CD4-positive, alpha-beta memory T cell (primary cell): ENCODE measurements at regions of chr1 and their contacts with region 1.

Region 1: GRCh38 chr1:147890177-147890790 is 12.3 kb upstream of the GJA8 start:
- DNase-seq: peak; percentile 47 to 60 (median 51)
- H3K4me3 ChIP-seq: no peak overlapping the region
- H3K4me3 Mint-ChIP-seq: no peak overlapping the region
- H3K27ac ChIP-seq: no peak overlapping the region
- H3K27ac Mint-ChIP-seq: peak overlapping the region in 1 of 7 donors; percentile 6
- H3K4me1 ChIP-seq: no peaks in the 10 kb centered on the region
- H3K4me1 Mint-ChIP-seq: peaks cover 0 to 9% (median under 1%) of the 10 kb centered on the region in 4 donors
- H3K27me3 ChIP-seq: no peaks in the 10 kb centered on the region
- H3K27me3 Mint-ChIP-seq: peaks cover 1 to 3% of the 10 kb centered on the region in 2 donors

Region 2: GRCh38 chr1:147273409-147274336 is 616.6 kb before region 1 on chr1:
- CTCF ChIA-PET with region 1: interaction called, 18 read pairs
- POLR2A ChIA-PET with region 1: no interaction called
- intact Hi-C with region 1: loop called (anchors 1 kb)
- DNase-seq: peak in 4 of 5 donors; percentile 36 to 45 (median 44)
- H3K4me3 ChIP-seq: no peak overlapping the region
- H3K4me3 Mint-ChIP-seq: no peak overlapping the region
- H3K27ac ChIP-seq: no peak overlapping the region
- H3K27ac Mint-ChIP-seq: no peak overlapping the region
- H3K4me1 ChIP-seq: no peaks in the 10 kb centered on the region
- H3K4me1 Mint-ChIP-seq: peaks cover 0 to 6% (median 4%) of the 10 kb centered on the region in 4 donors
- H3K27me3 ChIP-seq: no peaks in the 10 kb centered on the region
- H3K27me3 Mint-ChIP-seq: no peaks in the 10 kb centered on the region

Region 3: DNA sequence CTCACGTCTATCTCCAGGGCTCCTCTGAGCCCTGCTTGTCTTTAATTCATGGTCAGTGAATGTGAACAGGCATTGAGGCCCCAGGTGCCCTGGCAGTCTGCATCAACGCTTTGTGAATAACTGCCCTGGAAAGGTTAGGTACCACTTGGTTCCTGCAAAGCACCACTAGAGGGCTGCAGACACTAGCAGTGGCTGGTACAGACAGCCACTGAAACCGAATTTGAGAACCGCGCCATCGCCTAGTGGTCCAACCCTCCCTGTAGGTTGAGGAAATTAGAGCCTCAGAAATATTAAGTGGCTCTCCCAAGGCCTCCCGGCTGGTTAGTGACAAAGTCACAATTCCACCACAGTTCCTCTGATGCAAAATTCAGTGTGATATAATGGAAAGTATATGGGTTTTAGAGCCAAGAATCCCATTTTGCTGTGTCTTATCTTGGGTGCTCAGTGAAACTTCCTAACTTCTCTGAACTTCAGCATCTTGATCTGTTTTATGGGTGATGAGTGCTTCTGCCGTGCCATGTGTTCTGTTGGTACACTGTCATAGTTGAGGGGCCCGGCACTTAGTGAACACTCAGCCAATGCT is 395.2 kb before region 1 on chr1:
- CTCF ChIA-PET with region 1: interaction called, 13 read pairs
- POLR2A ChIA-PET with region 1: no interaction called
- intact Hi-C with region 1: loop called (anchors 1 kb)
- DNase-seq: peak; percentile 65 to 70 (median 67)
- H3K4me3 ChIP-seq: no peak overlapping the region
- H3K4me3 Mint-ChIP-seq: peak overlapping the region in 2 of 8 donors; percentile 12 to 64
- H3K27ac ChIP-seq: no peak overlapping the region
- H3K27ac Mint-ChIP-seq: no peak overlapping the region
- H3K4me1 ChIP-seq: no peaks in the 10 kb centered on the region
- H3K4me1 Mint-ChIP-seq: peaks cover 0 to 2% (median under 1%) of the 10 kb centered on the region in 4 donors
- H3K27me3 ChIP-seq: no peaks in the 10 kb centered on the region
- H3K27me3 Mint-ChIP-seq: peaks cover 0 to 10% of the 10 kb centered on the region in 2 donors

Region 4: GRCh38 chr1:147515046-147515869 is 375.0 kb before region 1 on chr1:
- CTCF ChIA-PET with region 1: interaction called, 17 read pairs
- POLR2A ChIA-PET with region 1: no interaction called
- intact Hi-C with region 1: loop called (anchors 1 kb)
- DNase-seq: peak in 4 of 5 donors; percentile 9 to 29 (median 24)
- H3K4me3 ChIP-seq: no peak overlapping the region
- H3K4me3 Mint-ChIP-seq: no peak overlapping the region
- H3K27ac ChIP-seq: no peak overlapping the region
- H3K27ac Mint-ChIP-seq: peak overlapping the region in 2 of 7 donors; percentile 39 to 51
- H3K4me1 ChIP-seq: no peaks in the 10 kb centered on the region
- H3K4me1 Mint-ChIP-seq: peaks cover 5 to 7% (median 6%) of the 10 kb centered on the region in 4 donors
- H3K27me3 ChIP-seq: no peaks in the 10 kb centered on the region
- H3K27me3 Mint-ChIP-seq: peaks cover 0 to 9% of the 10 kb centered on the region in 2 donors

Region 5: DNA sequence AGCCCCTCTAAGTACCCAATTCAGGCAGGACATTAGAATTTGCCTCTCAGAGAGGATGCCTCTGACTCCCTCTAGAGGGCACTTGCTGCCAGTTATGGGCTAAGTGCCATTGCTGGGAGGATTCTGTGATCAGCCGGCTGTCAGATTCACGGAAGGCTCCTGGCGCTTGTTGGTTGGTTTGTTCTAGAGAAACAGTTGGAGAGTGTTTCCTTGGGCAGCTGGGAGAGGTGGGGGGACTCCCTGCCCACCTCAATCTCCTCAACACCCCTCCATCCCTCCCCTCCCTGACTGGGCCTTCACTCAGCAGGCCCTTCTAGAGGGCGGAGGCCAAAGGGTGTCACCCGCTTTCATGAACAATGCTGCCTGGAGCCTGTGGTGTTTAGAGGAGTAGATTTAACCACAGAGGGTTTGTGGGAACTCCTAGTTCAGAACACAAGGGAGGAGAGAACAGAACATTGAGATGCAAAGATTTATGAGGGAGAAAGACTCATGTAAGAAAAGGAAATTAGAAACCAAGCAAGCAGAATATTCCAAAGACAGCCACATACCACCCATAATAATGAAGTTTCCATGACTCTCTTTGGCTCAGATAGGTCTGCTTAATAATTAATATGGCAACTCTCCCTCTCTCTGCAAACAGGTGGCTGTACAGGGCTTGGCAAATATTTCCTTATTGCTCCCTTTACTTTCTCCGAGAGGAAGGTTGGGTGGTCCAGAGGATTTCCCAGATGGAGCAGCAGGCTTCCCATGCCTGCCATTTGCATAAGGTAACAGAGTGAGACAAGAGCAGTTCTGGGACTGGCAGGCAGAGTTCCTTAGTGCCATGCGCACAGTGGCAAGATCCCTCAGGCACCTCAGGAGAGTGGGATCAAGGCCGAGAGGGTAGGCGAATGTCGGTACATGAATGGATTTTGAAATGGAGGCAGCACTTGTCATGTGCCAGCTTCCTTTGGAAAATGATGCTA is 190.0 kb before region 1 on chr1:
- CTCF ChIA-PET with region 1: interaction called, 12 read pairs
- POLR2A ChIA-PET with region 1: no interaction called
- intact Hi-C with region 1: loop called (anchors 1 kb)
- DNase-seq: peak; percentile 63 to 70 (median 68)
- H3K4me3 ChIP-seq: no peak overlapping the region
- H3K4me3 Mint-ChIP-seq: peak overlapping the region in 7 of 8 donors; percentile 40 to 80 (median 70)
- H3K27ac ChIP-seq: peak overlapping the region; percentile 30
- H3K27ac Mint-ChIP-seq: peak overlapping the region; percentile 37 to 91 (median 73)
- H3K4me1 ChIP-seq: peaks cover 9% of the 10 kb centered on the region
- H3K4me1 Mint-ChIP-seq: peaks cover 12 to 21% (median 17%) of the 10 kb centered on the region in 4 donors
- H3K27me3 ChIP-seq: no peaks in the 10 kb centered on the region
- H3K27me3 Mint-ChIP-seq: peaks cover 5 to 9% of the 10 kb centered on the region in 2 donors

Region 6: DNA sequence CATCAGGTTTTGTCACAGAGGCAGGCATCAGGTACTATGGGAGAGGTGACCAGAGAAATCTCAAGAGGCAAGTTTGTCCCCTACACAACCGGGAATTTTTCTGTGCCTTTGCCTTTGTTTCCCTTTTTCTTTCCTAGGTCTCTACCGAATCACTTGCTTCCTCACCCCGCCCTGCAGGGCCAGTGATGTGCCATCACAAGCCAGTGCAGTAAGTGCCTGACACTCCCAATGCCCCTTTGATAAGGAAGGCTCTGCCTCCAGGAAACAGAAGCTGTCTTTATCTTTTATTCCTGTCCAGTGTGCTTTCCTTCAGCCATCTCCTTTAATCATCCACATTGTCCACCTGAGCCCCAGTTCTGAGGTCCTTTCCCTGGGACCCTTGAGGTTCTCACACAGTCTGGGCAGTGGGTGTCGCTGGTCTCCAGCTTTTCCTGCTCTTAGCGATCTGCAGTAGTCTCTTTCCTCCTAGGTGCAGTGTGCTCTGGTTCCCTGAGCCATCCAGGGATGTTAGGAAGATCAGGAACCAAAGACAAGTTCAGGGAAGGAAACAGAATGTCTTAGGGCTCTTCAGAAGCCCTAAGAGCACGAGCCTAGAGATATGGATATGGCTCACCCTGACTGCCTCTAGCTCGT is 166.5 kb before region 1 on chr1:
- CTCF ChIA-PET with region 1: interaction called, 26 read pairs
- POLR2A ChIA-PET with region 1: no interaction called
- intact Hi-C with region 1: loop called (anchors 1 kb)
- DNase-seq: peak in 3 of 5 donors; percentile 23 to 30 (median 24)
- H3K4me3 ChIP-seq: no peak overlapping the region
- H3K4me3 Mint-ChIP-seq: no peak overlapping the region
- H3K27ac ChIP-seq: no peak overlapping the region
- H3K27ac Mint-ChIP-seq: peak overlapping the region in 2 of 7 donors; percentile 1 to 3
- H3K4me1 ChIP-seq: peaks cover 4% of the 10 kb centered on the region
- H3K4me1 Mint-ChIP-seq: peaks cover 0 to 9% (median 4%) of the 10 kb centered on the region in 4 donors
- H3K27me3 ChIP-seq: no peaks in the 10 kb centered on the region
- H3K27me3 Mint-ChIP-seq: peaks cover 3 to 6% of the 10 kb centered on the region in 2 donors

Region 7: GRCh38 chr1:147902183-147902845 is 12.0 kb after region 1 on chr1 and contains the start of gene GJA8:
- CTCF ChIA-PET with region 1: interaction called, 28 read pairs
- POLR2A ChIA-PET with region 1: no interaction called
- intact Hi-C with region 1: no loop called
- DNase-seq: no peak
- H3K4me3 ChIP-seq: no peak within 1 kb of the TSS
- H3K4me3 Mint-ChIP-seq: no peak within 1 kb of the TSS
- H3K27ac ChIP-seq: no peak within 1 kb of the TSS
- H3K27ac Mint-ChIP-seq: no peak within 1 kb of the TSS
- H3K4me1 ChIP-seq: no peaks in the 10 kb centered on the region
- H3K4me1 Mint-ChIP-seq: peaks cover 3 to 5% (median 4%) of the 10 kb centered on the region in 4 donors
- H3K27me3 ChIP-seq: no peaks in the 10 kb centered on the region
- H3K27me3 Mint-ChIP-seq: peaks cover 0 to 4% of the 10 kb centered on the region in 2 donors
- total RNA-seq, gene GJA8: not detected